Activated CD8-positive, alpha-beta T cell treated with anti-CD3 and anti-CD28 coated beads, Interleukin-2, amount 10 ng/mL, durations not matched to agents 7 days and 5 days (primary cell): ENCODE measurements at regions of chrX and their contacts with region 1.

Region 1: DNA sequence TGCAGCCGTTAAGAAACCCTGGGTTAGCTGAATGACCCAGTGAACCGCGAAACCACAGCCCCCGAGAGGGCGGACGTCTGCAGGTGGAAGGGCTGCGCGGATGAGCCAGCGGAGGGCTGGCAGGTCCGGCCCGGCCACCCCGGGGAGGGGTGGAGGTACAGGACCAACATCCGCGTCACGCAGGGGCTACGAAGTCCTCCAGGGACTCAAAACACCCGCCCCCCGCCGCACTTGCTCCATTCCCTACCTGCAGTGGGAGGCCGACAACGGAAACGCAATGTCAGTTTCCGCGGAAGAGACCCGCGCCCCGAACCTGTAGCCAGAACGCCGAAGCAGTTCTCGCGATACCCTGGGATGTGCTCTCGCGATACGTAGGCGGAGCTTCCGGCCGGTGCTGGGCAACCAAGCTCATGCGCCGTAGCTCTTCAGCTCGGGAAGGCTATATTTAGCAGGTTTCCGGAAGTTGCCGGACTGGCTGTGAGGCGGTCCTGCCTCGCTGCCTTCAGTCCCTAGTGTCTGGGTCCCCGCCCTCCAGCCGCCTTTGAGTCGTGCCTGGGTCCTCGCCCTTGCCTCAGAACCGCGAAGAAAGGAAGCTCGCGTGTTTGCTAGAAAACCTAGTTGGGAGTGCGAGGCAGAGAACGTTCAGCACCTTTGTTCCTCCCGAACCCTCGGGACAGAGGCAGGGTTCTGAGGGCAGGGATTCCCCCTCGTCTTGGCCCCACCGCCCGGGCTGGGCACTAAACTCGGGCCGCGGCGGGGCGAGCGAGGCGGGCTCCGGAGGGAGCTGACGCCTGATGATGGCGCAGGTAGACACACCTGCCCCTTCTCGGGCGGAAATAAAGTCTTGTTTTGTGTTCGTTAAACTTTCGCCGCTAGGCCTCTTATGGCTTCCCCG is at the starts of genes OFD1 and TRAPPC2:
- DNase-seq: peak; percentile 93
- ATAC-seq: peak; percentile 98
- H3K4me3 Mint-ChIP-seq: peak within 1 kb of the TSS; percentile 97
- H3K27ac Mint-ChIP-seq: peak within 1 kb of the TSS; percentile 97
- H3K4me1 Mint-ChIP-seq: peaks cover 46% of the 10 kb centered on the region
- H3K27me3 Mint-ChIP-seq: no peaks in the 10 kb centered on the region
- total RNA-seq, gene OFD1: 29.6 to 30.4 TPM
- total RNA-seq, gene TRAPPC2: 21.6 to 23.2 TPM

Region 2: GRCh38 chrX:13688958-13689740 is 45.4 kb before region 1 on chrX and contains the start of gene RAB9A:
- CTCF ChIA-PET with region 1: interaction called, 4 read pairs
- POLR2A ChIA-PET with region 1: interaction called, 18 read pairs
- DNase-seq: peak; percentile 78
- ATAC-seq: peak; percentile 96
- H3K4me3 Mint-ChIP-seq: peak within 1 kb of the TSS; percentile 75
- H3K27ac Mint-ChIP-seq: peak within 1 kb of the TSS; percentile 81
- H3K4me1 Mint-ChIP-seq: peaks cover 48% of the 10 kb centered on the region
- H3K27me3 Mint-ChIP-seq: no peaks in the 10 kb centered on the region
- total RNA-seq, gene RAB9A: 10.6 to 11.2 TPM

Region 3: DNA sequence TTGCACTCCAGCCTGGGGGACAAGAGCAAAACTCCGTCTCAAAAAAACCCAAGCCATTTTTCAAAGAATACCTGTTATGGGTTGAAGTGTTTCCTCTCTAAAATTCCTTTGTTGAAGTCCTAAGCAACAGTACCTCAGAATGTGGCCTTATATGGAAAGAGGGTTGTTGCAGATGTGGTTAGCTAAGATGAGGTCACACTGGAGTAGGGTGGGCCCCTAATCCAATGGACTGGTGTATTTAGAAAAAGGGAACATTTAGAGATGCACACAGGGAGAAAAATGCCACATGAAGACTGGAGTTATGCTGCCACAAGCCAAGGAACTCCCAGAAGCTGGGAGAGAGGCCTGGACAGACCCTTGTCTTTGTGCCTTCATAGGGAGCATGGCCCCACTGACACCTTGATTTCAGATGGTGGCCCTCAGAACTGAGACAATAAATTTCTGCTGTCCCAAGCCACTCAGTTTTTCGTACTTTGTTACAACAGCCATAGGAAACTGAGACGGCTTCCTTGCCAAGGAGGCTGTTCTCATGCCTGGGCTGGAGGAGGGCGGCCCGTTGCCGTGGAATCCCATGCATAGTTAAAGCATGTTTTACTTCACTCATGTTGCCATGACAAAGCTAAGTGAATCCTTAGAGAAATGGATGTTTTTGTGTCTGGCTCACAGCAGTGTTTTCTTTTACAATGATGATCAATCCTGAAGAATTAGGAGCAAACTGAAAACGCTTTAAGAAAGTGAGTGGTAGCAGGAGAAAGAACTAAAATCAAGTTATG is 16.6 kb before region 1 on chrX:
- CTCF ChIA-PET with region 1: interaction called, 4 read pairs
- POLR2A ChIA-PET with region 1: interaction called, 25 read pairs
- DNase-seq: no peak
- ATAC-seq: no peak
- H3K4me3 Mint-ChIP-seq: no peak overlapping the region
- H3K27ac Mint-ChIP-seq: peak overlapping the region; percentile 79
- H3K4me1 Mint-ChIP-seq: peaks cover 35% of the 10 kb centered on the region
- H3K27me3 Mint-ChIP-seq: no peaks in the 10 kb centered on the region